AG04449 (cell line): ENCODE measurements at regions of chr7 and their contacts with region 1.

Region 1: DNA sequence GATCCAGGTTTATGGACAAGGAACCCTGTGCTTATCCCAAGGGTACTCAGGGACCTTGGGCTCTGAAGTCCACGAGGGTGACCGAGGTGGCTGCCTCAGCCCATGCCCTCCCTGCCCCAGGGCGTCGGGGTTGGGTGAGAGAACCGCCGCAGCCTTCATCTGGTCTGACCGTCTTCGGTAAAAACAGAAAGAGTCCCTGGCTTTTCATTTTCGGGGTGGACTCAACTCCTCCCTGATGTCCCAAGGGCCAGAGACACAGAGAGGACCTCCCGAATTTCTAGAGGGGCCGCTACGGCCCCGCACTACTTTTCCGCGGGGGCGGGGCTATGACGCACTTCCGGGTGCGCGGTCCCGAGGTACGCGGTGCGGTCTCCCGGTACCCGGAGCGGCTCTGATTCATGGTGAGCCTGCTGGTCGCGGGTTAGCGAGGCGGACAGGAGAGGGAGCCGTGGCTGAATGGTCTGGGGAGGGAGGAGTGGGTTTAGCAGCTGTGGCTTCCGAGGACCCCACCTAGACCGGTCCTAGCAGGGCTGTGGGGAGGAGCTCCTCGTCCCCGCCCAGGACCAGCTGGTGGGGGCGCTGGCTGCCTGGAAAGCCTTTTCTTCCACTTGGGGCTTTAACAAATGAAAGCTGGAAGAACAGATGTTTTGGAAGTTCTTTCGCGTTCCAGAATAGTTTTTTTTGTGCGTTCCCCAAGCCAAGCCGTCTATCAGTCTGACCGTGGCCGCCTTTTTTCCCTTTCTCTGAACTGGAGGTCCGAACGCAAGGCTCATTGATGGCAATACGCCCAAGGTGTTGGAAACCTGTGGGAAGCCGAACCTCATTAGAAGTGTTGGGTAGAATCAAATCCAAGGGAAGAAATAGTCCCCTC is at the start of gene ZSCAN21:
- DNase-seq: no peak
- H3K4me3 ChIP-seq: peak within 1 kb of the TSS; percentile 96
- CTCF ChIP-seq: peak; percentile 25

Region 2: GRCh38 chr7:99949638-99950228 is 99.9 kb before region 1 on chr7:
- CTCF ChIA-PET with region 1: no interaction called
- POLR2A ChIA-PET with region 1: no interaction called
- DNase-seq: no peak
- H3K4me3 ChIP-seq: no peak overlapping the region
- CTCF ChIP-seq: no peak

Region 3: GRCh38 chr7:99975782-99976521 is 73.7 kb before region 1 on chr7 and contains the start of gene AZGP1:
- CTCF ChIA-PET with region 1: interaction called, 35 read pairs
- POLR2A ChIA-PET with region 1: no interaction called
- DNase-seq: no peak
- H3K4me3 ChIP-seq: no peak within 1 kb of the TSS
- CTCF ChIP-seq: no peak

Region 4: GRCh38 chr7:100021297-100021696 is 28.4 kb before region 1 on chr7:
- CTCF ChIA-PET with region 1: interaction called, 18 read pairs
- POLR2A ChIA-PET with region 1: no interaction called
- DNase-seq: no peak
- H3K4me3 ChIP-seq: no peak overlapping the region
- CTCF ChIP-seq: no peak